ENCODE measurements at regions of chr16 and their contacts with region 1.

Region 1: DNA sequence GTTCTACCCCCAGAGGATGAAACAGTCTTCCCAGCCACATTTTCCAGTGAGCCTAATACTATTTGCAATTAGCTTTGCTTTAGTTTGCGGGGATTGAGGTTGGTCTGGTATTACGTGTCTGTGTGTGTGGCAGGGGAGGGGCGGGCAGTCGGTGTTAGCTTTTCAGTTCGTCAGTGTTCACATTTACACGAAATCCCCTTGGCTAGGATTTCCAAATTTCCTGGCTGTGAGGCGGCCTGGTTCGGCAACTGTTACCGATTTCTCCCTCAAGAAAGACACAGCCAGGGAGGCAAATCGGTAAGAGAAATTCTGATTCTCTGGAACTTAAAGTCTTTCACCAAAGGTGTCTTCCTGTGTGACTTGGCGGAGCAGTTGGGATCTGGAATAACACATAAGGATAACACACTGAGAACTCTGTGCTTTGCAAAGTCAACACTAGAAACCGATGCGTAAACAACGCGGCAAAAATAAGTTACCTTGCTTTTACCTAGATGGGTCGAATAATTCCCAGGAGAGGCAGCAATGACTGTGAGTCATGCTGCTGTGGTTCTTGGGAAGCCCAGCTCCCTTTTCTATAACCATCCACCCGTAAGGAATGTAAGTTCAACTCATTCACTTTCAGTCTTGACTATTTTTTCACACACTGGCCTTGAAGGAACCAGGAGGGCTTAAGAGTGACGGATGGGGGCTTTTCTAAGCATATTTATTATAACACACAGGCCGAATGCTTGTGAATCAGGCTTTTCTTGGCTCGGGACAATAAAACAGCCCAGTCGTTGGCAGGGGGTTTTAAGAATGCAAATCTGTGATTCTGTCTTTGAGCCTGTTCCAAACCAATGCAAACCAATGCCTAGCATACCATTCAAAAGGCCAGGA is 24.2 kb downstream of the GPRC5B start:
- DNase-seq: no peak
- ATAC-seq: no peak
- H3K4me3 ChIP-seq: no peak overlapping the region
- H3K27ac ChIP-seq: peak overlapping the region in 1 of 12 donors; percentile 27
- H3K4me1 ChIP-seq: peaks cover 0 to 35% (median 16%) of the 10 kb centered on the region in 12 donors
- H3K27me3 ChIP-seq: no peaks in the 10 kb centered on the region
- CTCF ChIP-seq: no peak
- POLR2A ChIP-seq: no peak

Region 2: DNA sequence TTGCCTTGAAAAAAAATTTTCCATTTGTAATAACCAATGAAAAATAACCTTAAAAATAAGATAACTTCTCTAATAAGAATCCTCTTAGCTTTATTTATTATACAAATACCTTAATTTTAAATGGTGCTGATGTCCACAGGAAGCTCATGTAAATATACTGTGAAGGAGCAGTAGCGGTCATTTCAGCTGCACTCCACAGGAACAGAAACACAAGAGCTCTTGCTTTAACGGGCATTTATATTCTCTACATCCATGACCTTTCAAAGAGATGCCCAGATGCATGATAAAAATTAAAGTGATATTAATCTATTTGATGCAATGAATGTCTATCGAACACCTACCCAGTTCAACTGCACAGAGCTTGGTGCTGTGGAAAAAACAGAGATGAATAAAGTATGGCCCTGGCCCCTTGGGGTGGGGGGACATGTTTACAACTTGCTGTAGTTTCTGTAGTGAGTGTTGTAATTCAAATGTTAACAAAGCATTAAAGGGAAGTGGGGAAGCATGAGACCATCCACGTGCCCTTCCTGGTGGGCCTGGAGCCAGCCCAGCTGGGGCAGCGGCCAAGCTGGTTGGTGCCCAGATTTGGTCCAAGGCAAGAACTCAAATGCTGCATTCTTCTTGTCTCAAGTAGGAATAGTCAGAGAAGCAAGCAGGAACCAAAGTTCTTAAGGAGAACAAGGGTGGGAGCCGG is 94.4 kb before region 1 on chr16:
- intact Hi-C with region 1: loop called in 1 of 10 experiments (anchors 5 kb)
- DNase-seq: peak; percentile 47 to 83 (median 61)
- ATAC-seq: peak in 3 of 4 donors; percentile 59 to 88 (median 77)
- H3K4me3 ChIP-seq: peak overlapping the region in 2 of 12 donors; percentile 11 to 22
- H3K27ac ChIP-seq: peak overlapping the region in 6 of 12 donors; percentile 3 to 66 (median 30)
- H3K4me1 ChIP-seq: peaks cover 0 to 32% (median 9%) of the 10 kb centered on the region in 12 donors
- H3K27me3 ChIP-seq: no peaks in the 10 kb centered on the region
- CTCF ChIP-seq: no peak
- POLR2A ChIP-seq: no peak

Region 3: DNA sequence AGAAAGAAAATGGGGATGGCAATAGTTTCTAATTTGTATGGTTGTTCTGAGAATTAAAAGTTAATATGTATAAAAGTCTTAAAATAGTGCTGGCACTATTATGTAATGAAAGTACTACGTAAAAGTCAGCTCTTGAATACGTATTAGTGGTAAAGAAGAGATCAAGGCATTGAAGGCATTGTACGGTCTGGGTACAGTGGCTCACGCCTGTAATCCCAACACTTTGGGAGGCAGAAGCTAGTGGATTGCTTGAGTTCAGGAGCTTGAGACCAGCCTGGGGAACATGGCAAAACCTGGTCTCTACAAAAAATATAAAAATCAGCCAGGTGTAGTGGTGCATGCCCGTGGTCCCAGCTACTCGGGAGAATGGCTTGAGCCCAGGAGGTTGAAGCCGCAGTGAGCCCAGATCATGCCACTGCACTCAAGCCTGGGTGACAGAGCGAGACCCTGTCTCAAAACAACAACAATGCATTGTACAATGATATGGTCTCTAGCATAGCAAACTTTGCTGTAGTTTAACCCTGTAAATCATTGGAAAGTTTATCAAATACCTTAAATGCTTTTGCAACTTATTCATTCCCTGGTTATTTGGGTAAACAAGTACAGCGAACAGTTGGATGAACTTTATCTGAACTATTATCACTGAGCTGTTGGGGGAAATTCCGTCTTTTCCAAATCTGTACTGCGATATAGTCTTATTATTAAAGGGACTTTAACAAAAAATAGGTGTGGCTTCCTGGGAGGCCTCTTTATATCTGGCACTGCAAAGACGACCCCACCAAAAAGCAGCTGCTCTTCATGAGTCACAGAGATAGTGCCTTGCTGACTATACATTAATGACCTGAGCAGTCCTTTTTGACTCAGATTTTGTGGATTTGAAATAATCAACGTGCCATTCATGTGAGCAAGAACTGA is 49.3 kb before region 1 on chr16:
- intact Hi-C with region 1: loop called in 1 of 10 experiments (anchors 10 kb)
- DNase-seq: no peak
- ATAC-seq: peak in 3 of 4 donors; percentile 23 to 48 (median 30)
- H3K4me3 ChIP-seq: no peak overlapping the region
- H3K27ac ChIP-seq: peak overlapping the region in 8 of 12 donors; percentile 2 to 68 (median 40)
- H3K4me1 ChIP-seq: peaks cover 0 to 38% (median 20%) of the 10 kb centered on the region in 12 donors
- H3K27me3 ChIP-seq: no peaks in the 10 kb centered on the region
- CTCF ChIP-seq: no peak
- POLR2A ChIP-seq: no peak

Region 4: DNA sequence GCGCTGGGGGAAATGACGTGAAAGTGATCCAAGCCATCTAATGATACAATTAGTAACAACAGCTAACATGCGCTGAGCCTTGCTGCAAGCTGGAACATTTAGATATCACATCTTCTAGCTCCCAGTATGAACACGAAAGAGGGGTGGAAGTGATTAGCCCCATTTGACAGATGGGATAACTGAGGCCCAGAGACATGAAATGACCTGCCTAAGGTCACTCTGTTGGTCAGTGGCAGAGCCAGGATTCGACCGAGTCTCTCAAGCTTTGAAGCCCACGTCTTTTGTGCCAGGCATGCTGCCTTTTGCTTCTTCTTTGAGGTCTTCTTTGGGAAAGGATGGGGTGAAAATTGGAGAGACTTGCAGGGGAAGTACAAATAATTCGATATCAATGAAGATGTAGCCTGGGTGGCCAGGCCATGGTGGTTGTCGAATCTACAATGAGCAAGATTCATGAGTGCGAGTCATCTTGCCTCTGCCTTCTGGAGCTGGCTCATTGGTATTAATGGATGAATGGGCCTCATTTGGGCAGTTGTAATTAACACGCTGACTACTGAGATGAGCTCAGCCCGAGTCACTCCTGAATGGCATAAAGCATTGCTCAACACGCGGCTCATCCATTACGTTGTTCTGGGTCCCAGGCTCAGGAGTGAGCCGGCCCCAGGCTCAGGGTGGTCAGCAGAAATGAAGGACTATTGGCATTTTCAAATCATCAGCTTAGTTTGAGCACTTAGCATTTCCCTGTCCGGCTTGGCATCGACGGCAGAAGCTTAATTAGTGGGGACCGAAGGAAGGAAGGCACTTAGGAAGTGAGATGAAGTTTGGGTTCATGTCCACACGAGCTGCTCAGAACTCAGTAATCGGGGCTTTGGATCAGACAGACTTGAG is 52.3 kb after region 1 on chr16:
- intact Hi-C with region 1: no loop called
- DNase-seq: no peak
- ATAC-seq: no peak
- H3K4me3 ChIP-seq: no peak overlapping the region
- H3K27ac ChIP-seq: no peak overlapping the region
- H3K4me1 ChIP-seq: peaks cover 0 to 2% (median 0%) of the 10 kb centered on the region in 12 donors
- H3K27me3 ChIP-seq: peaks cover 0 to 17% (median 5%) of the 10 kb centered on the region in 9 donors
- CTCF ChIP-seq: no peak
- POLR2A ChIP-seq: no peak

Region 5: GRCh38 chr16:20129375-20129774 is 269.0 kb after region 1 on chr16:
- intact Hi-C with region 1: no loop called
- DNase-seq: no peak
- ATAC-seq: no peak
- H3K4me3 ChIP-seq: no peak overlapping the region
- H3K27ac ChIP-seq: no peak overlapping the region
- H3K4me1 ChIP-seq: no peaks in the 10 kb centered on the region
- H3K27me3 ChIP-seq: peaks cover 0 to 4% (median 0%) of the 10 kb centered on the region in 9 donors
- CTCF ChIP-seq: no peak
- POLR2A ChIP-seq: no peak